Aorta (tissue), 5 donors: ENCODE measurements at regions of chr19 and their contacts with region 1.

Region 1: DNA sequence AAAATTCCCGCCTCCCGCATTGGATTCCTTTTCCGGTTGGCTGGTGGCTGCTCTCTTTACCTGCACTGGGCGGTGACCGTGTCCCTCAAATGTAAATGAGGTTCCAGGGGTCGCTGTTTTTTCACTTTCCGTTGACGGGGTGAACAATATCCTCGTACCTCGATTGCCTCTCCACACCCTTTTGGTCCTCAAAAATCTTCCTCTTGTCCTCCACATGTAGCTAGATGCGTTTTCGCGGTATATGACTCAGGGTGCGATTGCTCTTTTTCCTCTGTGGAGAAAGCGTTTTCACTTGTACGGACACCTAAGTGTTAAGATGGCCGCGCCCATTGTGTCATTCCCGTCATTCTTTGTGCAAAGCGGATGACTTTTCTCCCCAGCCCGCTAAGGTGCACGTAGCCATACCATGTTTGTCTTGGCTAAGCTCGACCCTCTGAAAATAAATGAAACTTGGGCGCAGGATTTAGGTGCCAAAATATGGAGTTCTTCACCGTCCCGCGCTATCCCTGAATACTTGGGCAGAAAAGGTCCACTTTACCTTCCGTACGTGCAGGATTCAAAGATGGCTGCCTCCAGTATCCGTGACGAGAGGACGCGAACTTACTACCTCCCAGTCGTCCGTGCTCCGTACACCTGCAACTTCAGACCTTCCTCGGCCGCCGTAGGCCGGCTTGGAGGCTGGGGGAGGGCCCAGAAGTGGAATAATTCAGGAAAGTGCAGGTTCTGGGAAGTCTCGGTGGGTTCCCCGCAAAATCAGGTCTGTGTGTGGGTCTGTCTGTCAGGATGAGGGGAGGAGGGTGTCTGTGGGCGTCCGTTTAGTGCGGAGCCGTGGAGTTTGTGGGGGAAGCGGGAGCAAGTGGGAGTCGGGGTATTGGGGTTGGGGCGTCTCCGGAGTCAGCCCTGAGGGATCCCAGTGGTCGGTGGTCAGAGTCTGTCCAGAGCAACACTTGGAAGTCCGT is at the start of gene ZNF613:
- DNase-seq: peak; percentile 92 to 96
- ATAC-seq: peak; percentile 98
- H3K4me3 ChIP-seq: peak within 1 kb of the TSS; percentile 88
- H3K27ac ChIP-seq: peak within 1 kb of the TSS in 1 of 2 donors; percentile 87
- H3K4me1 ChIP-seq: no peaks in the 10 kb centered on the region
- H3K27me3 ChIP-seq: no peaks in the 10 kb centered on the region
- total RNA-seq, gene ZNF613: 6.4 to 8.8 TPM

Region 2: GRCh38 chr19:51460164-51460992 is 466.7 kb before region 1 on chr19:
- intact Hi-C with region 1: no loop called
- DNase-seq: no peak
- ATAC-seq: no peak
- H3K4me3 ChIP-seq: no peak overlapping the region
- H3K27ac ChIP-seq: no peak overlapping the region
- H3K4me1 ChIP-seq: no peaks in the 10 kb centered on the region
- H3K27me3 ChIP-seq: no peaks in the 10 kb centered on the region

Region 3: GRCh38 chr19:52048555-52049501 is 121.8 kb after region 1 on chr19 and contains the start of gene ZNF432:
- intact Hi-C with region 1: loop called in 1 of 2 experiments (anchors 1 kb)
- DNase-seq: peak; percentile 98
- ATAC-seq: peak; percentile 99
- H3K4me3 ChIP-seq: peak within 1 kb of the TSS; percentile 74 to 86
- H3K27ac ChIP-seq: peak within 1 kb of the TSS; percentile 8 to 93
- H3K4me1 ChIP-seq: no peaks in the 10 kb centered on the region
- H3K27me3 ChIP-seq: no peaks in the 10 kb centered on the region
- total RNA-seq, gene ZNF432: 21.4 to 22.0 TPM